ENCODE measurements at regions of chr15 and their contacts with region 1.

Region 1: GRCh38 chr15:59247364-59247763 is 40.7 kb downstream of the LDHAL6B start:
- DNase-seq: peak; percentile 84
- H3K4me3 ChIP-seq: no peak overlapping the region
- H3K27ac ChIP-seq: no peak overlapping the region
- H3K4me1 ChIP-seq: peaks cover 3% of the 10 kb centered on the region
- H3K27me3 ChIP-seq: no peaks in the 10 kb centered on the region
- CTCF ChIP-seq: peak; percentile 64 to 68
- POLR2A ChIP-seq: no peak

Region 2: GRCh38 chr15:59199626-59200465 is 47.5 kb before region 1 on chr15:
- CTCF ChIA-PET with region 1: no interaction called
- POLR2A ChIA-PET with region 1: no interaction called
- dilution Hi-C with region 1: no loop called
- intact Hi-C with region 1: no loop called
- DNase-seq: peak; percentile 54
- H3K4me3 ChIP-seq: no peak overlapping the region
- H3K27ac ChIP-seq: peak overlapping the region; percentile 45
- H3K4me1 ChIP-seq: peaks cover 8% of the 10 kb centered on the region
- H3K27me3 ChIP-seq: no peaks in the 10 kb centered on the region
- CTCF ChIP-seq: no peak
- POLR2A ChIP-seq: no peak

Region 3: GRCh38 chr15:59237119-59237855 is 10.1 kb before region 1 on chr15:
- CTCF ChIA-PET with region 1: interaction called, 16 read pairs
- POLR2A ChIA-PET with region 1: no interaction called
- dilution Hi-C with region 1: no loop called
- intact Hi-C with region 1: no loop called
- DNase-seq: peak; percentile 84
- H3K4me3 ChIP-seq: no peak overlapping the region
- H3K27ac ChIP-seq: peak overlapping the region; percentile 92
- H3K4me1 ChIP-seq: peaks cover 30% of the 10 kb centered on the region
- H3K27me3 ChIP-seq: no peaks in the 10 kb centered on the region
- CTCF ChIP-seq: no peak
- POLR2A ChIP-seq: no peak

Region 4: GRCh38 chr15:59306520-59307164 is 59.3 kb after region 1 on chr15:
- CTCF ChIA-PET with region 1: interaction called, 17 read pairs
- POLR2A ChIA-PET with region 1: no interaction called
- dilution Hi-C with region 1: no loop called
- intact Hi-C with region 1: no loop called
- DNase-seq: no peak
- H3K4me3 ChIP-seq: no peak overlapping the region
- H3K27ac ChIP-seq: no peak overlapping the region
- H3K4me1 ChIP-seq: peaks cover 38% of the 10 kb centered on the region
- H3K27me3 ChIP-seq: no peaks in the 10 kb centered on the region
- CTCF ChIP-seq: no peak
- POLR2A ChIP-seq: no peak

Region 5: GRCh38 chr15:59410391-59410896 is 163.1 kb after region 1 on chr15:
- CTCF ChIA-PET with region 1: interaction called, 19 read pairs
- POLR2A ChIA-PET with region 1: no interaction called
- dilution Hi-C with region 1: no loop called
- intact Hi-C with region 1: no loop called
- DNase-seq: no peak
- H3K4me3 ChIP-seq: no peak overlapping the region
- H3K27ac ChIP-seq: no peak overlapping the region
- H3K4me1 ChIP-seq: no peaks in the 10 kb centered on the region
- H3K27me3 ChIP-seq: peaks cover 0 to 5% of the 10 kb centered on the region in 2 experiments
- CTCF ChIP-seq: no peak
- POLR2A ChIP-seq: no peak